ENCODE measurements at regions of chr10 and their contacts with region 1.

Region 1: GRCh38 chr10:102615361-102615760 is 28.9 kb upstream of the TRIM8 start:
- DNase-seq: no peak
- H3K4me3 ChIP-seq: no peak overlapping the region
- H3K27ac ChIP-seq: no peak overlapping the region
- H3K4me1 ChIP-seq: peaks cover 2 to 73% (median 53%) of the 10 kb centered on the region in 4 experiments
- H3K27me3 ChIP-seq: no peaks in the 10 kb centered on the region

Region 2: GRCh38 chr10:102629661-102630614 is 14.6 kb after region 1 on chr10:
- CTCF ChIA-PET with region 1: interaction called, 56 read pairs
- POLR2A ChIA-PET with region 1: no interaction called
- DNase-seq: no peak
- H3K4me3 ChIP-seq: no peak overlapping the region
- H3K27ac ChIP-seq: no peak overlapping the region
- H3K4me1 ChIP-seq: peaks cover 7 to 96% (median 35%) of the 10 kb centered on the region in 4 experiments
- H3K27me3 ChIP-seq: no peaks in the 10 kb centered on the region